ENCODE measurements at regions of chr7 and their contacts with region 1.

Region 1: GRCh38 chr7:151539088-151539671 is 19.5 kb upstream of the RHEB start:
- DNase-seq: no peak
- H3K4me3 ChIP-seq: no peak overlapping the region
- H3K27ac ChIP-seq: no peak overlapping the region
- H3K27me3 ChIP-seq: peaks cover 6% of the 10 kb centered on the region
- CTCF ChIP-seq: no peak

Region 2: GRCh38 chr7:151470711-151471110 is 68.5 kb before region 1 on chr7:
- CTCF ChIA-PET with region 1: interaction called, 12 read pairs
- POLR2A ChIA-PET with region 1: no interaction called
- DNase-seq: no peak
- H3K4me3 ChIP-seq: no peak overlapping the region
- H3K27ac ChIP-seq: no peak overlapping the region
- H3K27me3 ChIP-seq: no peaks in the 10 kb centered on the region
- CTCF ChIP-seq: no peak

Region 3: GRCh38 chr7:151519765-151520418 is 19.3 kb before region 1 on chr7 and contains the start of gene RHEB:
- CTCF ChIA-PET with region 1: no interaction called
- POLR2A ChIA-PET with region 1: interaction called, 11 read pairs
- DNase-seq: peak; percentile 99
- H3K4me3 ChIP-seq: peak within 1 kb of the TSS; percentile 85
- H3K27ac ChIP-seq: peak within 1 kb of the TSS; percentile 85
- H3K27me3 ChIP-seq: no peaks in the 10 kb centered on the region
- CTCF ChIP-seq: no peak
- polyA plus RNA-seq, gene RHEB: 108 and 154 TPM in 2 replicates

Measured in AG04450 (cell line).